K562 (cell line): ENCODE measurements at regions of chr17 and their contacts with region 1.

Region 1: GRCh38 chr17:44167181-44167861 is 3.2 kb upstream of the ASB16 start:
- DNase-seq: no peak
- ATAC-seq: no peak
- H3K4me3 ChIP-seq: no peak overlapping the region
- H3K27ac ChIP-seq: no peak overlapping the region
- H3K4me1 ChIP-seq: peaks cover 13 to 26% of the 10 kb centered on the region in 2 experiments; a peak in 4 of 5 replicates
- H3K27me3 ChIP-seq: no peaks in the 10 kb centered on the region
- CTCF ChIP-seq: no peak
- EP300 ChIP-seq: no peak
- POLR2A ChIP-seq: no peak
- RAD21 ChIP-seq: no peak

Region 2: DNA sequence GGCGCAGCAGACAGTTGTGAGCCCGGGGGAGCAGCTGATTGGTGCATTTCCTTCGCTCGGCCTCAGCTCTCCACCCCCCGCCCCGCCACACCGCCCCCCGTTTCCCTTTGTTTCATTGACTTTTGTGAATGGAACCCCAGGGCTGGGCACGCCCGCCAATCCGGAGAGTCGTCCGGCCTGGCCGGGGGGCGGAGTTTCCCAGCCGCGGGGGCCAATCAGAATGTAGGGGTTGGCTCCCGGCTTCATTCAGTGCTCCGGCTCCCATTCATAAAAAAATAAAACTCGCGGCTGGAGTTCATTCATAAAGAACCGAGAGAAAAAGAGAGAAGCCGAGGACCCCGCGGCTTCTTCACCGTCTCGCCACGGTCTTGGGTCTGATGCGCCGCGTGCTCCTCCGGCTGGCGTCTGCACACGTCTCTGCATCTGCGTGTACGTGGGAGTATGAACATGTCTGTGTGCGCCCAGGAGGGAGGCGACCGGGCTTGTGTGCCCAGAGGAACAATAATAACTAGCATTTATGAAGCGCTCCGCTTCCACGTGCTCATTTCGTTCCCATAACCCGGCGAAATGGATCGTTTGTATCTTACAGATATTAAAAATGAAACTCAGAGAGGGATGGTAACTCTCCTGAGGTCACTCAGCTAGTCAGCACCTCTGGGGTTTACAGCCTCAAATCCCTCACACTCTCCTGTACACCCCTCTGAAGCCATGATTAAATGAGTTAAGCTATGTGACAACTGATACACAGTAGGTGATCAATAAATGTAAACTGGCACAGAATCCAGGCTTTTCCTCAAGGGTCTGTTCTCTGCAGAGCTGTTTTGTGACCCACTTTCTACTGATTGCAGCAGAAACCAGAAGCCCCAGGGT is 620.8 kb before region 1 on chr17 and contains the start of gene ETV4:
- CTCF ChIA-PET with region 1: no interaction called
- POLR2A ChIA-PET with region 1: no interaction called
- in situ Hi-C with region 1: no loop called
- intact Hi-C with region 1: no loop called
- DNase-seq: peak; percentile 96 to 99 (median 98)
- ATAC-seq: peak; percentile 88
- H3K4me3 ChIP-seq: peak within 1 kb of the TSS; percentile 73
- H3K27ac ChIP-seq: peak within 1 kb of the TSS; percentile 64
- H3K4me1 ChIP-seq: peaks cover 27 to 36% of the 10 kb centered on the region in 2 experiments
- H3K27me3 ChIP-seq: no peaks in the 10 kb centered on the region
- CTCF ChIP-seq: no peak
- EP300 ChIP-seq: no peak
- POLR2A ChIP-seq: peak; percentile 66
- RAD21 ChIP-seq: no peak
- polyA plus RNA-seq, gene ETV4: 5.5 to 7.6 TPM

Region 3: GRCh38 chr17:44149750-44150329 is 17.5 kb before region 1 on chr17:
- CTCF ChIA-PET with region 1: no interaction called
- POLR2A ChIA-PET with region 1: interaction called, 14 read pairs
- in situ Hi-C with region 1: no loop called
- intact Hi-C with region 1: no loop called
- DNase-seq: no peak
- ATAC-seq: no peak
- H3K4me3 ChIP-seq: no peak overlapping the region
- H3K27ac ChIP-seq: peak overlapping the region; percentile 20; the same call in 2 of the 3 replicates
- H3K4me1 ChIP-seq: peaks cover 15 to 24% of the 10 kb centered on the region in 2 experiments; a peak in 4 of 5 replicates
- H3K27me3 ChIP-seq: no peaks in the 10 kb centered on the region
- CTCF ChIP-seq: no peak
- EP300 ChIP-seq: no peak
- POLR2A ChIP-seq: no peak
- RAD21 ChIP-seq: no peak

Region 4: DNA sequence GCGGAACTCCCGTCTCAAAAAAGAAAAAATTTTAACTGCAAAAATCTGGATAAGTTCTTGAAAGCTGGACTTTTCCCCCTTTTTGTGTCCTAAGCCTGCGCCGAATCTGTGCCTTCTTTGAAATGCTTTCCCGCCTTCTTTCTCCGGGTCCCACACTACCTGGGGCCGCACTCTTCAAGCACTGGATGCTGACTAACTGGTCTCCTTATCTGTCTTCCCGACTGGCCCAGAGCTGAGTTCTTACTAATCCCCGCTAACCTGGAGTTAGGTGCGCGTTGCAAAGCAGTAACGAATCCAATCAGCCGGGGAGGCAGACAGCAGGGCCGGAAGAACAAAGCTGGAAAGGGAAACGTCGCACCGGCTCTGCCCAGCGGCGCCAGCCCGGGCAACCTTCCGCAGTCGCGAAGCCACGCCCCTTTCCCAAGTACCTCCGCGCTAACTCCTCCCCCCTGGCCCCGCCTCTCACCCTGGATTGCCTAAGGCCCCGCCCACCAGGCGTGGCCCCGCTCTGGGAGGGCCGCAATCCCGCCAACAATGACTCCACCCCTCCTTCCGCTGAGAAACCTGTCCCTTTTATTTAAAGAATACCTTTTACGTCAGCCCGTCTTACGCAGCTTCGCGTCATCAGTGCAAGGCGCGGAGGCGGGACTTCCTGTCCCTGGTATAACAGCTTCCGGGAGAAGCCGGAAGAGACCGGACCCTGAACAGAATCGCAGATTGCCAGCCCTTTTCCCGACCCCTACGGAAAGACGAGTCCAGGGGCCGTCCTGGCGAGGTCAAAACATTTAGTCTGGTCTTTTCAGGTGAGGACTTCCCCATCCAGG is 19.2 kb after region 1 on chr17 and contains the start of gene TMUB2:
- CTCF ChIA-PET with region 1: no interaction called
- POLR2A ChIA-PET with region 1: interaction called, 35 read pairs
- in situ Hi-C with region 1: no loop called
- intact Hi-C with region 1: no loop called
- DNase-seq: peak; percentile 99 to 100 (median 99)
- ATAC-seq: peak; percentile 89
- H3K4me3 ChIP-seq: peak within 1 kb of the TSS; percentile 93
- H3K27ac ChIP-seq: peak within 1 kb of the TSS; percentile 97
- H3K4me1 ChIP-seq: peaks cover 13 to 23% of the 10 kb centered on the region in 2 experiments
- H3K27me3 ChIP-seq: no peaks in the 10 kb centered on the region
- CTCF ChIP-seq: no peak
- EP300 ChIP-seq: no peak
- POLR2A ChIP-seq: peak; percentile 93
- RAD21 ChIP-seq: no peak
- polyA plus RNA-seq, gene TMUB2: 4.1 to 6.2 TPM